ENCODE measurements at regions of chr3 and their contacts with region 1.

Region 1: DNA sequence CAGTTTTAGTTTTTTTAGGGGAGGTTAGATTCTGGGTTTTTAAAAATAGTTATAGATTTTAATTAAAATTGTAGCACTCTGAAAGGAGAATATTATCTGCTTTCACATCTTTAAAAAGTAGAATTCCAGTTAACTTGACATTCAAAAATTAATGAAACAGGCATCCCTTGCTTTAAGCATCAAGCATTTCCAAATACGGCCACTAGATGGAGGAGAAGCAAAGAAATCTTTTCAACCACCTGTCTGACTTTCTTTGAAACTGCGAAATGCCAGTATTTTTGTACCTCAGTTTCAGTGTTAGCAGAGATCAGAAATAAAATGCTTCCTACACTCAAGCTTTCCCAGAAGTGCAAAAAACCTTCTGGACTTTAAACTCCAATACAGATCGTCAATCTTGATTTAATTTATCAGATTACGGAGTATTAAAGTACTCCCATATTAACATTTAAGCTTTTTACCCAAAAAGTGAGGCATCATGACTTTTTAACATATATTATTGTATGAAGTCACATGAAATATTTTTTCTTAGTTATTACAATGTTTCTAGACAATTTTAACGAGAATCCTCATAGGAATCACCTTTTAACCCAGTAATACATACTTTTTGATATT is 153.3 kb downstream of the P3H2 start:
- DNase-seq: peak; percentile 81
- H3K4me3 ChIP-seq: no peak overlapping the region
- H3K27ac ChIP-seq: no peak overlapping the region
- H3K4me1 ChIP-seq: peaks cover 11% of the 10 kb centered on the region
- H3K27me3 ChIP-seq: no peaks in the 10 kb centered on the region
- CTCF ChIP-seq: peak; percentile 86

Region 2: DNA sequence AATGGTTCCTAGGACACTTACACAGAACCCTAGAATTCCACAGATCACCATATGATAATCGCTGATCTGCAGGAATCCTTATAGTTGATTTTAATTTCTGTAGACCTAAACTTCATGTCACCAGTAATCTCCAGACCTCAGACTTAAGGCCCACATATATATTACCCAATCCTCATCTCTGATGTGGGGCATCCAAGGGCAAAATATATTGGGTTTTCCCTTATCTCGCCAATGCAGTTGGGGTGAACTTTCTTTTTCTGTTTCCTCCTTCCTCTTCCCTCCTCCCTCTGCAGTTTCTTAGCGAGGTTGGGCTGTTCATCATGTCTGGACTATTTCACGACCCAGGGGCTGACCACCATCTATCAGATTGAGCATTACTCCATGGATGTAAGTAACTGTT is 76.9 kb before region 1 on chr3:
- CTCF ChIA-PET with region 1: no interaction called
- POLR2A ChIA-PET with region 1: no interaction called
- intact Hi-C with region 1: no loop called
- DNase-seq: no peak
- H3K4me3 ChIP-seq: no peak overlapping the region
- H3K27ac ChIP-seq: no peak overlapping the region
- H3K4me1 ChIP-seq: no peaks in the 10 kb centered on the region
- H3K27me3 ChIP-seq: no peaks in the 10 kb centered on the region
- CTCF ChIP-seq: no peak

Region 3: GRCh38 chr3:190012314-190012782 is 45.0 kb after region 1 on chr3:
- CTCF ChIA-PET with region 1: interaction called, 5 read pairs
- POLR2A ChIA-PET with region 1: no interaction called
- intact Hi-C with region 1: loop called (anchors 5 kb)
- DNase-seq: peak; percentile 71
- H3K4me3 ChIP-seq: no peak overlapping the region
- H3K27ac ChIP-seq: peak overlapping the region; percentile 39
- H3K4me1 ChIP-seq: peaks cover 67% of the 10 kb centered on the region
- H3K27me3 ChIP-seq: no peaks in the 10 kb centered on the region
- CTCF ChIP-seq: no peak

Region 4: DNA sequence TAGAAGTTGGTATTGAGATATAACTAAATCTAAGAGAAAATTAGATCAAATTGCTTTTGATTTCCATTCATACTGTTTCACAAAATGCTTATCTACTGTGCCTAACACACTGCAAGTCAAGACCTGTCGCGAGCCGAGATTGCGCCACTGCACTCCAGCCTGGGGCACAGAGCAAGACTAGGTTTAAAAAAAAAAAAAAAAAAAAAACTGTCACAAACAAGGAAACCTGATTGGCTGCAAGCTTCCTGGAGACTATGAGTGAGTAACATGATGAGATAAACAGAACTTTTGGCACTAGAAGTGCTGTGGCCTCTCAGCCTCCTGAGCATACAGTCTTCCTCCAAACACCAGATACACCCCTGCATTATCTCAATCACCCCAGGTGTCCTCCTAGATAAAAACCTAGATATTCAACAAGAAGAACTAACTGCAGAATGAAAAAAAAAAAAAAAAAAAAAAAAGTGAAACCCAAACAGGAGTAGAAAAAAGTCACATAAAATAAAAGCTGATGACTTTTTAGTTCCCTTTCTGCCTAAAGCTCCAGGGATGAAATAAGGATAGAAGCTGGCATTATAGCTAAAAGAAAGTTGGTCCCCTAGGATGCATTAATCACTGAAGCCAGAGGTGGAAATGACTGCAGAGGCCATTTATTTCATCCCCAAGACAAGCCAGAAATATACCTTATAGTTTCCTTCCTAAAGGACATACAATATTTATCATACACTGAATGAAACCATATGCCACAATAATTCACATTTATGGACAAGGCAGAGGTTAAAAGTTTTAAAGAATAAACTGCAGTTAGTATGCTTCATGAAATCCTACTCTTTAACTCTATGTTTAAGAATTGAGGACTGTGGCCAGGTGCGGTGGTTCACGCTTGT is 70.9 kb after region 1 on chr3:
- CTCF ChIA-PET with region 1: no interaction called
- POLR2A ChIA-PET with region 1: no interaction called
- intact Hi-C with region 1: loop called (anchors 5 kb)
- DNase-seq: peak; percentile 75
- H3K4me3 ChIP-seq: no peak overlapping the region
- H3K27ac ChIP-seq: no peak overlapping the region
- H3K4me1 ChIP-seq: peaks cover 30% of the 10 kb centered on the region
- H3K27me3 ChIP-seq: no peaks in the 10 kb centered on the region
- CTCF ChIP-seq: no peak

Region 5: GRCh38 chr3:190120269-190121060 is 153.1 kb after region 1 on chr3 and contains the start of gene P3H2:
- CTCF ChIA-PET with region 1: interaction called, 4 read pairs
- POLR2A ChIA-PET with region 1: no interaction called
- intact Hi-C with region 1: loop called (anchors 2 kb)
- DNase-seq: peak; percentile 96
- H3K4me3 ChIP-seq: peak within 1 kb of the TSS; percentile 85
- H3K27ac ChIP-seq: peak within 1 kb of the TSS; percentile 53
- H3K4me1 ChIP-seq: peaks cover 4% of the 10 kb centered on the region
- H3K27me3 ChIP-seq: no peaks in the 10 kb centered on the region
- CTCF ChIP-seq: peak; percentile 70
- total RNA-seq, gene P3H2: 19.6 and 21.7 TPM in 2 replicates

Region 6: DNA sequence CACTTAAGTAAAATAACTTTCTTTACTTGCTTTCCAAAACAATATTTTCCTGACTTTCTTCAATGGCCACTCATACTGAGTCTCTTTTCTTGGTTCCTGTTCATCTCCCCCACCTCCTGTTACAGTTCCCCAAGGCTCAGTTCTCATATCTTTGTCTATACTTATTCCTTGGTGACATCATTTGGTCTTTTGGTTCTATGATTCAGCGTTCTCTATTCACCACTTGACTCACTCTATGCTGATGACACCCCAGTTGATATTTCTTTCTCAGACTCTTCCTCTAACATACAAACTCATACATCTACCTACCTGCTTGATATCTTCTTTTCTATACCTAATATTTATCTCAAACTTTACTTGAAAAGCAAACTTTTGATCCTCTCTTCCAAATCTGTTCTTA is 238.4 kb after region 1 on chr3:
- CTCF ChIA-PET with region 1: interaction called, 13 read pairs
- POLR2A ChIA-PET with region 1: no interaction called
- intact Hi-C with region 1: loop called (anchors 1 kb)
- DNase-seq: no peak
- H3K4me3 ChIP-seq: no peak overlapping the region
- H3K27ac ChIP-seq: no peak overlapping the region
- H3K4me1 ChIP-seq: no peaks in the 10 kb centered on the region
- H3K27me3 ChIP-seq: no peaks in the 10 kb centered on the region
- CTCF ChIP-seq: no peak

Region 7: GRCh38 chr3:190671658-190672057 is 704.3 kb after region 1 on chr3:
- CTCF ChIA-PET with region 1: no interaction called
- POLR2A ChIA-PET with region 1: no interaction called
- intact Hi-C with region 1: no loop called
- DNase-seq: peak; percentile 51
- H3K4me3 ChIP-seq: no peak overlapping the region
- H3K27ac ChIP-seq: no peak overlapping the region
- H3K4me1 ChIP-seq: peaks cover 17% of the 10 kb centered on the region
- H3K27me3 ChIP-seq: no peaks in the 10 kb centered on the region
- CTCF ChIP-seq: no peak

Measured in A673 (cell line).